PC-3 (cell line): ENCODE measurements at regions of chr7 and their contacts with region 1.

Region 1: DNA sequence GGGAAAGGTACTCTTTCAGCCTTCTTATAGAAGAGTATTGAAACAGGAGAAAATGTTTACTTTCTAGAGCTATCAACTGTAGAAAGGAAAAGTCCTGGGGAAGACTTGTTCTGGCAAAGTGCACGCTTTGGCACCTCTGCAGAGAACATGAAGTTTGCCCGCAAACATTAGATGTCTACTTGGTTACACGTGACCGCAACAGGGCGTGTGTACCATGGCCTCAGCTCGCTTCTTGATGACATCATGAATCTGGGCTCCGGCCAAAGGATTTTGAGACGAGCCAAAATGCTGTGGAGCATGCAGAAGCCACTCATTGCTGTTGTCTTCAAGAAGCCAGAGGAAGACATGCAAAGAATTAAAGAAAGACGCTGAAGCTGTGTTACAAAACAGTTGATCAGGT is 8.6 kb upstream of the TAS2R60 start:
- DNase-seq: peak; percentile 66
- ATAC-seq: peak; percentile 12
- H3K4me3 ChIP-seq: no peak overlapping the region
- H3K27ac ChIP-seq: no peak overlapping the region
- H3K4me1 ChIP-seq: peaks cover 29% of the 10 kb centered on the region
- H3K27me3 ChIP-seq: no peaks in the 10 kb centered on the region
- CTCF ChIP-seq: no peak

Region 2: GRCh38 chr7:143345428-143345900 is 89.2 kb before region 1 on chr7:
- CTCF ChIA-PET with region 1: no interaction called
- POLR2A ChIA-PET with region 1: no interaction called
- intact Hi-C with region 1: no loop called
- DNase-seq: no peak
- ATAC-seq: no peak
- H3K4me3 ChIP-seq: no peak overlapping the region
- H3K27ac ChIP-seq: no peak overlapping the region
- H3K4me1 ChIP-seq: no peaks in the 10 kb centered on the region
- H3K27me3 ChIP-seq: no peaks in the 10 kb centered on the region
- CTCF ChIP-seq: no peak

Region 3: GRCh38 chr7:143479055-143479766 is 44.6 kb after region 1 on chr7:
- CTCF ChIA-PET with region 1: no interaction called
- POLR2A ChIA-PET with region 1: no interaction called
- intact Hi-C with region 1: loop called (anchors 5 kb)
- DNase-seq: no peak
- ATAC-seq: no peak
- H3K4me3 ChIP-seq: no peak overlapping the region
- H3K27ac ChIP-seq: no peak overlapping the region
- H3K4me1 ChIP-seq: no peaks in the 10 kb centered on the region
- H3K27me3 ChIP-seq: no peaks in the 10 kb centered on the region
- CTCF ChIP-seq: no peak